ENCODE measurements at regions of chr13 and their contacts with region 1.

Region 1: GRCh38 chr13:112968908-112969691 is at the start of gene MCF2L:
- DNase-seq: peak; percentile 51
- ATAC-seq: peak; percentile 81 to 86
- total RNA-seq, gene MCF2L: 39.1 to 41.6 TPM

Region 2: GRCh38 chr13:112981451-112981850 is 12.4 kb after region 1 on chr13:
- intact Hi-C with region 1: loop called in 1 of 2 experiments (anchors 1 kb)
- DNase-seq: no peak
- ATAC-seq: no peak